ENCODE measurements at regions of chr19 and their contacts with region 1.

Region 1: GRCh38 chr19:18192673-18193387 is at the start of gene MPV17L2:
- DNase-seq: peak; percentile 100
- H3K4me3 Mint-ChIP-seq: peak within 1 kb of the TSS; percentile 83
- H3K27ac Mint-ChIP-seq: peak within 1 kb of the TSS; percentile 90
- H3K4me1 Mint-ChIP-seq: peaks cover 19% of the 10 kb centered on the region
- H3K27me3 Mint-ChIP-seq: no peaks in the 10 kb centered on the region
- total RNA-seq, gene MPV17L2: 6.3 to 6.5 TPM

Region 2: GRCh38 chr19:17703824-17704463 is 488.9 kb before region 1 on chr19:
- CTCF ChIA-PET with region 1: no interaction called
- intact Hi-C with region 1: no loop called
- DNase-seq: peak; percentile 82
- H3K4me3 Mint-ChIP-seq: no peak overlapping the region
- H3K27ac Mint-ChIP-seq: no peak overlapping the region
- H3K4me1 Mint-ChIP-seq: no peaks in the 10 kb centered on the region
- H3K27me3 Mint-ChIP-seq: peaks cover 2% of the 10 kb centered on the region

Region 3: DNA sequence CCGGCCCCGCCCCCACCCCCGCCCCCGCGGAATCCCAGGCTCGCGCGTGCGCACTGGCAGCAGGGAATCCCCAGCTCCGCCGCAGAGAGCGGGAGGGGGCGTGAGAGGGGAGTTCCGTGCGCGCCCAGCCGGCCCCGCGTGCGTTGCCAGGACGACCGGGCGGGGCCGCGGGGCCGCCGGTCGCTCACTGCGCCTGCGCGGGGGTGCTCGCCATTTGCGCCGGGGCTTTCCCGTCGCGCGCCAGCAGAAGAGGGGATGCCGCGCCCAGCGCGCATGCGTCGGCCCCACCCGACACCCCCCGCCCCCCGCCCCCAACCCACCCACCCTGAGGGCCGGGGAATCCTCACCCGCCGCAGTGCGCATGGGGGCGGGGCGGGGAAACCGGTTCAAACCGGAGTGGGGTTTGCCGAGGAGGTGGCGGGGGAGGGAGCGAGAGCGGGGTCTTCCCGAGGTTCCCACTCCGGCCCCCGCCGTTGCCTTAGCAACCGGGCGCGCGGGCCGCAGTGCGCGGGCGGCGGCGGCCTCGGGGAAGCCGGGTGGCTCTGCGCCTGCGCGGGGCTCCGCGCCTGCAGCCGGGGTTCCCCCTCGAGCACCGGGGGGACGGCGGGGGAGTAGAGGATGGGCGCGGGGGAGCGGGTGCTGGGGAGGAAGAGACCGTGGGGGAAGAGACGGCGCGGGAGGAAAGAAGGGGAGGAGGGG is 244.9 kb before region 1 on chr19:
- CTCF ChIA-PET with region 1: no interaction called
- intact Hi-C with region 1: loop called (anchors 5 kb)
- DNase-seq: peak; percentile 94
- H3K4me3 Mint-ChIP-seq: peak overlapping the region; percentile 58
- H3K27ac Mint-ChIP-seq: no peak overlapping the region
- H3K4me1 Mint-ChIP-seq: peaks cover 49% of the 10 kb centered on the region
- H3K27me3 Mint-ChIP-seq: peaks cover 35% of the 10 kb centered on the region

Region 4: GRCh38 chr19:18152444-18152816 is 40.4 kb before region 1 on chr19:
- CTCF ChIA-PET with region 1: no interaction called
- intact Hi-C with region 1: loop called (anchors 1 kb)
- DNase-seq: peak; percentile 100
- H3K4me3 Mint-ChIP-seq: peak overlapping the region; percentile 79
- H3K27ac Mint-ChIP-seq: peak overlapping the region; percentile 93
- H3K4me1 Mint-ChIP-seq: peaks cover 22% of the 10 kb centered on the region
- H3K27me3 Mint-ChIP-seq: no peaks in the 10 kb centered on the region

Region 5: GRCh38 chr19:18203863-18204393 is 11.1 kb after region 1 on chr19 and contains the start of gene RAB3A:
- CTCF ChIA-PET with region 1: interaction called, 5 read pairs
- intact Hi-C with region 1: loop called (anchors 1 kb)
- DNase-seq: peak; percentile 100
- H3K4me3 Mint-ChIP-seq: peak within 1 kb of the TSS; percentile 94
- H3K27ac Mint-ChIP-seq: peak within 1 kb of the TSS; percentile 68
- H3K4me1 Mint-ChIP-seq: peaks cover 22% of the 10 kb centered on the region
- H3K27me3 Mint-ChIP-seq: peaks cover 5% of the 10 kb centered on the region
- total RNA-seq, gene RAB3A: 3.8 to 6.0 TPM

Region 6: DNA sequence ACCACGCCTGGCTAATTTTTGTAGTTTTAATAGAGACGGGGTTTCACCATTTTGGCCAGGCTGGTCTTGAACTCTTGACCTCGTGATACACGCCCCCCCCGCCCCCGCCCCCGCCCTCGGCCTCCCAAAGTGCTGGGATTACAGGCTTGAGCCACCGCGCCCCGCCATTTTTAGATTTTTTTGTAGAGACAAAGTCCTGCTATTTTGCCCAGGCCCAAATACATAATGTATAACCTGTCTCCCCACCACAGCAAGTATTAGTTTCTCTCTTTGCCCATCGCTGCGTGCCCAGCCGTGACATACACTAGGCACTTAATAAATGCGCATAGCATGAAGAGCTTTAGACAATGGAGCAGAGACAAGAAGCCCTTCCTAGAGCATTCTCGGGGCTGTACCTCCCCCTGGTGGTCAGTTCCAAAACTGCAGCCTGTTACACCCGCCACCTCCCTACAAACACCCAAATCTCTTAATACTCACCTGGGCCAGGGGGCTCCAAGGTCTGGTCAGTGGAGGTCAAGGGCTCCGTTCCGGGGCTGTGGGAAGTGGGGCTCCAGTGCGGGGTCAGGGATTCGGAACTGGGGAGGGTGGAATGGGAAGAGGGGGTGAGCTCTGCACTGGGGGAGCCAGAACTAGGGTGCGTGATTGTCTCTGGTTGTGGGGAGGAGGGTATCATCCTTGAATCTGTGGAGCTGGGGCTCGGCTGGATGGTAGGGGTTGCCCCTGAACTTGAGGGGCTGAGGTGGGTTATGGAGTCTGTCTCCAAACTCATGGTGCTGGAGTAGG is 58.9 kb after region 1 on chr19:
- CTCF ChIA-PET with region 1: interaction called, 28 read pairs
- intact Hi-C with region 1: loop called (anchors 1 kb)
- DNase-seq: peak; percentile 90
- H3K4me3 Mint-ChIP-seq: no peak overlapping the region
- H3K27ac Mint-ChIP-seq: no peak overlapping the region
- H3K4me1 Mint-ChIP-seq: peaks cover 2% of the 10 kb centered on the region
- H3K27me3 Mint-ChIP-seq: peaks cover 23% of the 10 kb centered on the region

Region 7: GRCh38 chr19:18340190-18340989 is 147.6 kb after region 1 on chr19 and contains the start of gene PGPEP1:
- CTCF ChIA-PET with region 1: interaction called, 3 read pairs
- intact Hi-C with region 1: loop called (anchors 2 kb)
- DNase-seq: peak; percentile 54
- H3K4me3 Mint-ChIP-seq: peak within 1 kb of the TSS; percentile 77
- H3K27ac Mint-ChIP-seq: peak within 1 kb of the TSS; percentile 73
- H3K4me1 Mint-ChIP-seq: peaks cover 15% of the 10 kb centered on the region
- H3K27me3 Mint-ChIP-seq: no peaks in the 10 kb centered on the region
- total RNA-seq, gene PGPEP1: 14.4 to 15.6 TPM

Region 8: GRCh38 chr19:18385194-18385674 is 192.4 kb after region 1 on chr19:
- CTCF ChIA-PET with region 1: no interaction called
- intact Hi-C with region 1: no loop called
- DNase-seq: no peak
- H3K4me3 Mint-ChIP-seq: no peak overlapping the region
- H3K27ac Mint-ChIP-seq: no peak overlapping the region
- H3K4me1 Mint-ChIP-seq: no peaks in the 10 kb centered on the region
- H3K27me3 Mint-ChIP-seq: peaks cover 32% of the 10 kb centered on the region

Measured in activated naive CD4-positive, alpha-beta T cell treated with anti-CD3 and anti-CD28 coated beads for 36 hours (primary cell).